AG04450 (cell line): ENCODE measurements at regions of chr11 and their contacts with region 1.

Region 1: DNA sequence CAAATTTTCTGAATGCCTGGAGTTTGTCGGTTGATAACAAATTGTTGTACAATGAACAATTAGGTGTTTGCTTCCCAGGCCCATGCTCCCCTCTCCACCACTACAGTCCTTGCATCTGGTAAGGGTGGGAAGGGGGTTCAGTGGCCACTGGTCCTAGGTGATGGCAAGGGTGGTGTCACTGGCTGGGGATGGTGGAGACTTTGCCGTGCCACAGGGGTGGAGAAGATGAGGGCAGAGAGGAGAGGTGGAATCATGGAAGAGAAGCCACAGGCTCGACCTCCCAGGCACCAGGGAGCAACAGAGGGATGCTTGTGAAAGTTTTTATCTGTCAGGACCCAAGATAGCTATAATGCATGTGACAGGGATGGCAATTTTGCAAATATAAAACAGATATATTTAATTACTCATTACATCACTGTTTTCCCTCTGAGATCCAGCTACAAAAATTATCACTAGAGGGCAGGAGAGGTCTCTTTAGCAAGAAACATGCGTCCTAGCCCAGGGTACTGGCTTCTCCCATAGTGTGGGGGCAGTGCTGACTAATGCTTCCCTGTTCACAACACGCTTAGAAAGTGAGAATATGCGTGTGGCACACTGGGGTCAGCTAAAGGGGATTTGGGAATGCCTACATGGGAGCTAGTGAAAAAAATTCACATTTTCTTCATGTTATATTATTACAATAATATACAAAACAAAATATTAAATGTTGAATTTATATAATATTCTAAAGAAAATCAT is 49.0 kb upstream of the AMPD3 start:
- DNase-seq: peak; percentile 77
- H3K4me3 ChIP-seq: no peak overlapping the region
- H3K27ac ChIP-seq: no peak overlapping the region
- H3K27me3 ChIP-seq: no peaks in the 10 kb centered on the region
- CTCF ChIP-seq: peak; percentile 81

Region 2: GRCh38 chr11:10322830-10323792 is 82.9 kb before region 1 on chr11:
- CTCF ChIA-PET with region 1: interaction called, 16 read pairs
- POLR2A ChIA-PET with region 1: no interaction called
- DNase-seq: no peak
- H3K4me3 ChIP-seq: no peak overlapping the region
- H3K27ac ChIP-seq: peak overlapping the region; percentile 68
- H3K27me3 ChIP-seq: no peaks in the 10 kb centered on the region
- CTCF ChIP-seq: peak; percentile 59

Region 3: GRCh38 chr11:10394229-10395101 is 11.6 kb before region 1 on chr11:
- CTCF ChIA-PET with region 1: interaction called, 15 read pairs
- POLR2A ChIA-PET with region 1: no interaction called
- DNase-seq: no peak
- H3K4me3 ChIP-seq: no peak overlapping the region
- H3K27ac ChIP-seq: peak overlapping the region; percentile 76
- H3K27me3 ChIP-seq: no peaks in the 10 kb centered on the region
- CTCF ChIP-seq: no peak

Region 4: GRCh38 chr11:10441652-10442503 is 35.9 kb after region 1 on chr11:
- CTCF ChIA-PET with region 1: no interaction called
- POLR2A ChIA-PET with region 1: no interaction called
- DNase-seq: no peak
- H3K4me3 ChIP-seq: no peak overlapping the region
- H3K27ac ChIP-seq: no peak overlapping the region
- H3K27me3 ChIP-seq: no peaks in the 10 kb centered on the region
- CTCF ChIP-seq: no peak

Region 5: DNA sequence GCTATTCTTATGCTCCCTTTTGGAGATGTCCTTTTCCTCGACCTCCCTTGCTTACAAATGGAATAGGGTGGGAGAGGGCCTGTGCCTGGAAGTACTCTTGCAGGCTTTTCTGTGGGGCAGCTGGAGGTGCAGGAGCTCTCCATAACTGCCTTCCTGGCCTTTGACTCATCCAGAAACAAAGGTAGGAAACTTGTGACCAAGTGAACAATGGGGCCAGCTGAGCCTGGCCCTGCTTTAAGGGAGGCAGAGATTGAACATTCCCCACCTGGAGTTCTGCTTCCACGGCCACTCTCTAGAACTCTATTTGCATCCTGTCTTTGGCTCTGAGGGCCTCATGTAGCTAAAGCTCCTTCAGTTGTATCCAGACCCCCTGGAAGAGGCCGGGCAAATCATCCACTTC is 167.5 kb after region 1 on chr11:
- CTCF ChIA-PET with region 1: no interaction called
- POLR2A ChIA-PET with region 1: no interaction called
- DNase-seq: no peak
- H3K4me3 ChIP-seq: no peak overlapping the region
- H3K27ac ChIP-seq: no peak overlapping the region
- H3K27me3 ChIP-seq: no peaks in the 10 kb centered on the region
- CTCF ChIP-seq: no peak

Region 6: GRCh38 chr11:10735481-10736475 is 329.8 kb after region 1 on chr11:
- CTCF ChIA-PET with region 1: interaction called, 27 read pairs
- POLR2A ChIA-PET with region 1: no interaction called
- DNase-seq: peak; percentile 96
- H3K4me3 ChIP-seq: peak overlapping the region; percentile 43
- H3K27ac ChIP-seq: peak overlapping the region; percentile 88
- H3K27me3 ChIP-seq: no peaks in the 10 kb centered on the region
- CTCF ChIP-seq: peak; percentile 99